ENCODE measurements at regions of chr14 and their contacts with region 1.

Region 1: GRCh38 chr14:99609245-99610117 is 5.5 kb upstream of the CCDC85C start:
- DNase-seq: no peak
- H3K4me3 ChIP-seq: no peak overlapping the region
- H3K27ac ChIP-seq: no peak overlapping the region
- H3K27me3 ChIP-seq: no peaks in the 10 kb centered on the region
- CTCF ChIP-seq: peak in 17 of 56 donors; percentile 10 to 51 (median 34)

Region 2: DNA sequence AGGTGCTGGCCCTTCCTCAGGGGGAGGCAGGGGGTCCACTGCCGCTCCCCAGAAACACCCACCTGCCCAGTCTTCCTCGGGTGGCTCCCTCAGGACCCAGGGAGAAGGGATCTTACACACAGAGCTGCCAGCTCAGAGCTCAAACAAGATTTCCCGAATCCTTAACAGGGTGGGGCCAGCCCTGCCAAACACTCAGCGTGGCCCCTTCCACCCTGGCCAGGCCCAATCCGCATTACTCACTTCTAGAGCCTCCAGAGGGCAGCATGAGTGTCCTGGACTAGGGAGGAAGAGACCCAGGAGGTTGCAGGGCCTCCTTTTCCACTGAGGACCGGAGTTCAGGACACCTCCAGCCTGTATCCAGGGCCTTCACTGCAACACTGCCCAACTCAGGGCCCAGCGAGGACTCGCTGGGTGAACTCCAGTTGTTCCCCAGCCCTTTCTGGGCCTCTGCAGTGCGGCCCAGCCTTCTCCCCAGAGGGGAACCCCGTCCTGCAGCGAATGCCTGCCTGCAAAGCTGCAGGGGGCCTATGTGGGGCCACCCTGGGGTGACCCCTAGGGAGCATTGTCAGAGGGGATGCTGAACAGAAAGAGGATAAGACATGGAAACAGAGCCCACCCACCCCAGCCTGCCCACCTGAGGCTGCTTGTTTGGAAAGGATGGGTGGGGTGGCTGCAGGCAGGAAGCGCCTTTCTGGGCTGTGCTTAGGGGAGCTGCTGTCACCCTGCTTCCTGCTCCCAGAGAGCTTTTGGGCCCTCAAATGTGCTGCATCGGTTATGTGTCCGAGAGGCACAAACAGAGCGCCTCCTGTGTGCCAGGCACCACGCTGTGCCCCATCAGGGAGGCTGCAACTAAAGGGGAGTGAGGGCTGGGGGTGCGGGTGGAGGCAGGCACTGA is 84.4 kb before region 1 on chr14:
- intact Hi-C with region 1: loop called in 1 of 2 experiments (anchors 5 kb)
- DNase-seq: no peak
- H3K4me3 ChIP-seq: no peak overlapping the region
- H3K27ac ChIP-seq: peak overlapping the region in 1 of 59 donors; percentile 33
- H3K27me3 ChIP-seq: no peaks in the 10 kb centered on the region
- CTCF ChIP-seq: peak in 8 of 56 donors; percentile 2 to 30 (median 18)

Region 3: GRCh38 chr14:99563233-99564129 is 46.0 kb before region 1 on chr14:
- intact Hi-C with region 1: loop called in 1 of 2 experiments (anchors 2 kb)
- DNase-seq: peak; percentile 68 to 96 (median 78)
- H3K4me3 ChIP-seq: no peak overlapping the region
- H3K27ac ChIP-seq: peak overlapping the region in 30 of 59 donors; percentile 2 to 96 (median 40)
- H3K27me3 ChIP-seq: no peaks in the 10 kb centered on the region
- CTCF ChIP-seq: peak in 53 of 56 donors; percentile 29 to 73 (median 50)

Measured in dorsolateral prefrontal cortex (tissue), 120 donors.